ENCODE measurements at regions of chr2 and their contacts with region 1.

Region 1: DNA sequence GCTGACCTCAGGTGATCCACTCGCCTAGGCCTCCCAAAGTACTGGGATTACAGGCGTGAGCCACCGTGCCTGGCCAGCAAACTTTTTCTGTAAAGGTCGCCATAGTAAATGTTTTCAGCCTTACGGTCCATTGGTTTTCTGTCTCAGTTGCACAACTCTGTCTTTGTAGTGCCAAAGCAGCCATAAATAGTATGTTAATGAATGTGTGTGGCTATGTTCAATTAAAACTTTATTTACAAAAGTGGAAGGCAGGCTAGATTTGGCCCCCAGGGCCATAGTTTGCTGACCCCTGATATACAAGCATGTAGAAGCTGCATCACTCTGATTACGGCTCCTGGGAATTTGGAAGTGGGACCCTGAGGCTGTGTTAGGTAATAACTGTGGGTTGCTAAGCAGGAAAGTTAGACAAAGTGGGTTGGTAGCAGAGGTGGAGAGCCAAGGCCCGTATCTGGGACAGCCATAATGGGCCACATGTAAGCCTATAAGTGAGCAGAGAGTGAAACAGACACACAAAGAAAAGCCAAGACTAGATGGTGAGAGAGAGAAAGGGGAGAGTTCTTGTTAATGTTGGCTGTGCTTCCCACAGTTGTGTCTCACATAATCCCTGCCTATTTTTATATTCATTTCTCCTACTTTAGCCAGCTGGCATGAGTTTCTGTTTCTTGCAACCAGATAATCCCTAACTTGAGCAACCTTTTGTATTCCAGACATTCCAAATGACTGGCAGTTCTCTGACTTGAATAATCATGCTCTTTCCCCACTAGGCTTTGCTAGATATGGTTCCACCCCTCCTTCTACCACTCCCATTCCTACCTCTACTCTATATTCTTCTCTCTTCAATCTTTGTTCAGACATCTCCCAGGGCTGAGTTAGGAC is 223.3 kb upstream of the STON1 start:
- DNase-seq: no peak
- ATAC-seq: peak; percentile 77
- H3K4me3 ChIP-seq: no peak overlapping the region
- H3K27ac ChIP-seq: peak overlapping the region; percentile 62 to 87
- H3K4me1 ChIP-seq: peaks cover 0 to 4% of the 10 kb centered on the region in 2 donors
- H3K27me3 ChIP-seq: no peaks in the 10 kb centered on the region

Region 2: GRCh38 chr2:48248241-48248933 is 58.3 kb before region 1 on chr2:
- intact Hi-C with region 1: loop called (anchors 2 to 5 kb)
- DNase-seq: no peak
- ATAC-seq: peak; percentile 82
- H3K4me3 ChIP-seq: no peak overlapping the region
- H3K27ac ChIP-seq: no peak overlapping the region
- H3K4me1 ChIP-seq: peaks cover 3 to 6% of the 10 kb centered on the region in 2 donors
- H3K27me3 ChIP-seq: no peaks in the 10 kb centered on the region

Measured in aorta (tissue), 5 donors.